Heart left ventricle (tissue), 16 donors: ENCODE measurements at regions of chr5 and their contacts with region 1.

Region 1: GRCh38 chr5:137754126-137754960 is at the start of gene HNRNPA0:
- DNase-seq: peak; percentile 96 to 98 (median 97)
- ATAC-seq: peak; percentile 93 to 98 (median 96)
- H3K4me3 ChIP-seq: peak within 1 kb of the TSS; percentile 58 to 97 (median 82)
- H3K27ac ChIP-seq: peak within 1 kb of the TSS; percentile 94 to 100 (median 99)
- H3K4me1 ChIP-seq: peaks cover 2 to 37% (median 23%) of the 10 kb centered on the region in 12 donors
- H3K27me3 ChIP-seq: no peaks in the 10 kb centered on the region
- CTCF ChIP-seq: peak in 3 of 12 donors; percentile 8 to 22 (median 18)
- POLR2A ChIP-seq: peak; percentile 68 to 97
- total RNA-seq, gene HNRNPA0: 4.0 to 21.0 (median 14.2) TPM

Region 2: GRCh38 chr5:137888857-137889759 is 134.8 kb after region 1 on chr5 and contains the start of gene PKD2L2:
- intact Hi-C with region 1: loop called in 1 of 10 experiments (anchors 5 kb)
- DNase-seq: peak; percentile 87 to 94 (median 93)
- ATAC-seq: peak; percentile 89 to 98 (median 96)
- H3K4me3 ChIP-seq: peak within 1 kb of the TSS; percentile 21 to 72 (median 59)
- H3K27ac ChIP-seq: peak within 1 kb of the TSS; percentile 82 to 96 (median 91)
- H3K4me1 ChIP-seq: peaks cover 0 to 33% (median 11%) of the 10 kb centered on the region in 12 donors
- H3K27me3 ChIP-seq: no peaks in the 10 kb centered on the region
- CTCF ChIP-seq: peak in 5 of 12 donors; percentile 4 to 26 (median 14)
- POLR2A ChIP-seq: peak; percentile 44 to 78
- total RNA-seq, gene PKD2L2: 0.37 to 1.1 (median 0.52) TPM in 8 of 9 donors, not detected in the other

Region 3: DNA sequence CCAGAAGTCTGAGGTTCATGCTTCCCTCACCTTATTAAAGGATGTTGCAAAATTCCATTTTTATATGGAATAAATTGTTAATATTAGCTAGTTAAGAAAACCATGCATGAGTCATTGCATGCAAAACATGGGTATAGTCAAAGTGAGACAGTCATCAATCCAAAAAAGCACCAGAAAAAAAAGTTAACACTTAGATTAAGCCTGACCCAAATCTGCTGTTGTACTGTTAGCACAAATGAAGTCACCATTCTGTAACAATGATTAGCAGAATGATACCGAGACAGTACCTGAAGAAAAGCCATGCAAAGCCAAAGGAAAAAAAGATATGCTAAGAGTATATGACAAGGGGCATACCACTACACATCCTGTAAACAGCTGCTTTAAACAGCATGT is 184.4 kb after region 1 on chr5:
- intact Hi-C with region 1: no loop called
- DNase-seq: no peak
- ATAC-seq: no peak
- H3K4me3 ChIP-seq: no peak overlapping the region
- H3K27ac ChIP-seq: no peak overlapping the region
- H3K4me1 ChIP-seq: peaks cover 0 to 15% (median 2%) of the 10 kb centered on the region in 12 donors
- H3K27me3 ChIP-seq: no peaks in the 10 kb centered on the region
- CTCF ChIP-seq: no peak
- POLR2A ChIP-seq: no peak